Calu3 (cell line): ENCODE measurements at regions of chr10 and their contacts with region 1.

Region 1: GRCh38 chr10:15370856-15371701 is at the start of gene FAM171A1:
- DNase-seq: peak; percentile 53
- H3K4me3 Mint-ChIP-seq: peak within 1 kb of the TSS; percentile 46
- H3K27ac Mint-ChIP-seq: no peak within 1 kb of the TSS
- H3K4me1 Mint-ChIP-seq: no peaks in the 10 kb centered on the region
- H3K27me3 Mint-ChIP-seq: peaks cover 75% of the 10 kb centered on the region
- CTCF ChIP-seq: no peak
- total RNA-seq, gene FAM171A1: 1.0 and 2.6 TPM in 2 replicates

Region 2: DNA sequence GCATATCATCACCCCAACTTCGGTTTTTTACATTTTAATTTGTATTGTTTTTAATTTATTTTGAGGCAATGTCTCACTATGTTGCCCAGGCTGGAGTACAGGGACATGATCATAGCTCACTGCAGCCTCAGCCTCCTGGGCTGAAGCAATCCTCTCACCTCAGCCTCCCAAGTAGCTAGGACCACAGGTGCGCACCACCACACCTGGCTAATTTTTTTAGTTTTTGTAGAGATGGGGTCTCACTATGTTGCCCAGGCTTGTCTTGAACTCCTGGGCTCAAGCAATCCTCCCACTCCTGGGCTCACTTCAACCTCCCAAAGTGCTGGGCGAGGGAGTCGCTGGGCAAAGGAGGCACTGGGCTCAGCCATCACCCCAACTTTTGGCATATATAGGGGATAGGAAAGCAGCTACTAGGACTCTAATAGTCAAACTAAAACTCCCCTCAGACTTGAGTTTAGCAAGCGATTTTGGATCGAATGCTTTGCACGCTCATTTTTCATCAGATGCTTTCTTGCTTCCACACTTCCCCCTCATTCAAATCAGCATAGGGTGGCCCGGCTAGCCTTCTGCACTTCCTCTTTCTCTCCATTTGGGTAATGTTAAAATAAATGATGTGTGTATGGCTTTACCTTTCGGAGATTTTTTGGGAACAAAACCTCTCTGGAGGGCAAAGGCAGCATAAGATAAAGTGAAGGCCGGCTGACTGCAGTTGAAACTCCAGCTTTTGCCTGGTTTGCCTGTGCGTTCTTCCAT is 181.8 kb before region 1 on chr10:
- CTCF ChIA-PET with region 1: no interaction called
- intact Hi-C with region 1: no loop called
- DNase-seq: no peak
- H3K4me3 Mint-ChIP-seq: no peak overlapping the region
- H3K27ac Mint-ChIP-seq: no peak overlapping the region
- H3K4me1 Mint-ChIP-seq: no peaks in the 10 kb centered on the region
- H3K27me3 Mint-ChIP-seq: peaks cover 8% of the 10 kb centered on the region
- CTCF ChIP-seq: no peak

Region 3: GRCh38 chr10:15209827-15210509 is 161.1 kb before region 1 on chr10:
- CTCF ChIA-PET with region 1: no interaction called
- intact Hi-C with region 1: loop called (anchors 2 kb)
- DNase-seq: peak; percentile 86
- H3K4me3 Mint-ChIP-seq: no peak overlapping the region
- H3K27ac Mint-ChIP-seq: no peak overlapping the region
- H3K4me1 Mint-ChIP-seq: no peaks in the 10 kb centered on the region
- H3K27me3 Mint-ChIP-seq: peaks cover 18% of the 10 kb centered on the region
- CTCF ChIP-seq: peak; percentile 80

Region 4: DNA sequence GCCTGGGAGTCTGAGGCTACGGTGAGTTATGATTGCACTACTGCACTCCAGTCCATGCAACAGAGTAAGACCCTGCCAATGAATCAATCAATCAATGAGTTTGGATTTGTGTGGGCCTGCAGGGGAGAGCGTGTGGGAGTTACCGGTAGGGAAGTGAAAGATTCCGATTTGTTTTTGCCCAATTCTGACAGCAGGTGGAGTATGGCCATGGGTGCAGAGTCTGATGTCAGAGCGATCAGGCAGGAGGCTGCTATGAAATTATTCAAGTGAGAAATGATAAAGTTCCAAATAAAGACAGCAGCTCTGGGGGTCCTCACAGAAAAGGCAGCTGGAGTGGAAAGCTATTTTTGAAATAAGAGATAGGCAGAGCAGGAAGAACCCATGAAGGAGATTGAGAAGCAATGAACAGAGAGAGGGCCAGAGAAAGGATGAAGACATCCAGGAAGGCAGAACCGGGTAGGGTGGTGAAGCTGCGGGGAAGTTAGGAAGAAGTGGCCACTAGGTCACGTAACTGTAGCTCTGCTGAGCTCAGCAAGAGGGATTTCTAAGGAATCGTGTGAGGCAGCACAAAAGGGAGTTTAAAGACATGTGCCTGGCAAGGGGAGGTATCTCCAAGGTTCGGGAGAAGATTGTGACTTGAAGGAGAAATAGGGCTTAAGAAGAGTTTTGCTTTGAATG is 108.9 kb before region 1 on chr10:
- CTCF ChIA-PET with region 1: no interaction called
- intact Hi-C with region 1: loop called (anchors 2 kb)
- DNase-seq: peak; percentile 35
- H3K4me3 Mint-ChIP-seq: no peak overlapping the region
- H3K27ac Mint-ChIP-seq: no peak overlapping the region
- H3K4me1 Mint-ChIP-seq: no peaks in the 10 kb centered on the region
- H3K27me3 Mint-ChIP-seq: no peaks in the 10 kb centered on the region
- CTCF ChIP-seq: peak; percentile 34

Region 5: GRCh38 chr10:15419279-15419874 is 48.3 kb after region 1 on chr10:
- CTCF ChIA-PET with region 1: no interaction called
- intact Hi-C with region 1: no loop called
- DNase-seq: peak; percentile 38
- H3K4me3 Mint-ChIP-seq: no peak overlapping the region
- H3K27ac Mint-ChIP-seq: no peak overlapping the region
- H3K4me1 Mint-ChIP-seq: no peaks in the 10 kb centered on the region
- H3K27me3 Mint-ChIP-seq: no peaks in the 10 kb centered on the region
- CTCF ChIP-seq: peak; percentile 62

Region 6: GRCh38 chr10:15461353-15462108 is 90.5 kb after region 1 on chr10:
- CTCF ChIA-PET with region 1: no interaction called
- intact Hi-C with region 1: no loop called
- DNase-seq: peak; percentile 27
- H3K4me3 Mint-ChIP-seq: no peak overlapping the region
- H3K27ac Mint-ChIP-seq: no peak overlapping the region
- H3K4me1 Mint-ChIP-seq: no peaks in the 10 kb centered on the region
- H3K27me3 Mint-ChIP-seq: peaks cover 53% of the 10 kb centered on the region
- CTCF ChIP-seq: no peak